ENCODE measurements at regions of chr7 and their contacts with region 1.

Region 1: DNA sequence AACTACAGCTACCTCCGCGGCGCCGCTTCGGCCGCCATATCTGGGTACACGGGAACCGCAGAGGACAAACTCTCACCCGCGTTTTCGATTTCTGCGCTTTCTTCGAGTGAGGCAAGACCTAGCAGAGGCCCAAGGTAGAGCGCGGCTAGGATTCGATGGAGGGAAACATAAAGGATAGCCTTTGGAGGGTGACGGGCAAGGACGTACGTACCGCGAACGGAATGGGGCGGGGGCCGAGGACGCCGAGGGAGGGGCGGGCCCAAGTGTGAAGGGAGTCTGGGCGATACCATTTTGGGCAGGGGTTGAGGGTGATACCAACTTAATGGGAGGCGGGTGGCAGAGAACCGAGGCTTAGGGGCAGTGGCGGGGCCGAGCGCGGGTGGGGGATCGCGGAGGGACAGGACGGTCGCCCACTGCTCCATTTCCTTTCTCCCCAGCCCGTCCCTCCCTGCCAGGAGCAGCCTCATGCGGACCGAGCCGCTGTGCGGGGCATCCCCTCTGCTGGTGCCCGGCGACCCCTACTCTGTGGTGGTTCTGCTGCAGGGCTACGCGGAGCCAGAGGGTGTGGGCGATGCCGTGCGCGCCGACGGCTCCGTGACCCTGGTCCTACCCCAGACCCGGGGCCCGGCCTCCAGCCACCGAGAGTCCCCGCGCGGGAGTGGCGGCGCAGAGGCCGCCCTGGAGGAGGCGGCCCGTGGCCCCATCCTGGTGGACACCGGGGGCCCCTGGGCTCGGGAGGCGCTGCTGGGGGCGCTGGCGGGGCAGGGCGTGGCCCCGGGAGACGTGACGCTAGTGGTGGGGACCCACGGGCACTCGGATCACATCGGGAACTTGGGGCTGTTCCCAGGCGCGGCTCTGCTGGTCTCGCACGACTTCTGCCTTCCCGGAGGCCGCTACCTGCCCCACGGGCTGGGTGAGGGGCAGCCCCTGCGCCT is at the start of gene MBLAC1:
- DNase-seq: peak; percentile 95
- ATAC-seq: peak; percentile 74
- H3K4me3 Mint-ChIP-seq: peak within 1 kb of the TSS; percentile 93
- H3K27ac Mint-ChIP-seq: peak within 1 kb of the TSS; percentile 99
- H3K4me1 Mint-ChIP-seq: peaks cover 28% of the 10 kb centered on the region
- H3K27me3 Mint-ChIP-seq: no peaks in the 10 kb centered on the region
- total RNA-seq, gene MBLAC1: 1.6 to 2.2 TPM

Region 2: DNA sequence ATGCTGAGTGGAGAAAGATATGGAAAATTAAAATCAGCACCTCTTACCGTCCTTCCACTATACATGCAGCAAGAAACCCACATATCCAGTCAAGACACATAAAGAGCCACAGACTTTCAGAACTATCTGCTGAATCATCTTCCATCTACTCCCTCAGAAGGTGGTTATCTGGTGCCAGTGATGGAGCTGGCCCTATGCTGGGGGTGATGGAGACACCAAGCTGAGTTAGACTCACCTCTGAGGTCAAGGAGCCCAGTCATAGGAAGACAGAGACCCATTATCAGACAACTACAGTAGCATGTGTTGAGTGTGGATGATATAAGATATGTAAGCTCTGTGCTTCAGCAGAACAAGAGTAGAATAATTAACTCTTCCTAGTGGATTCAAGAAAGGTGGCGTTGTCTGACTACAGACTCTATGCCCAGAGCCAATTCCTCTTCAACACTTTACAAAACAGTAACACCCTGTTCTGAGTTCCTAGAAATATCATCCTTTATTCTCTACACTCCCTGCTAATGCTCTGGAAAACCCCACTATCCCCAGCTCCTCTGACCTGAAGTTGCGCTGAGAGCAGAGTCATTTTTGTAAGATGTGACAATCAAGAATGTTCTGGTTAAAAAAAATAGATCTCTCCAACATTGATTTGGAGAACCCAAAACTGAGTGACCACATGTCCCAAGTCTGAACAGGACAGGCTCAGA is 461.7 kb before region 1 on chr7:
- CTCF ChIA-PET with region 1: no interaction called
- POLR2A ChIA-PET with region 1: no interaction called
- intact Hi-C with region 1: no loop called
- DNase-seq: peak; percentile 27
- ATAC-seq: peak; percentile 86
- H3K4me3 Mint-ChIP-seq: no peak overlapping the region
- H3K27ac Mint-ChIP-seq: peak overlapping the region; percentile 39
- H3K4me1 Mint-ChIP-seq: peaks cover 11% of the 10 kb centered on the region
- H3K27me3 Mint-ChIP-seq: no peaks in the 10 kb centered on the region

Region 3: DNA sequence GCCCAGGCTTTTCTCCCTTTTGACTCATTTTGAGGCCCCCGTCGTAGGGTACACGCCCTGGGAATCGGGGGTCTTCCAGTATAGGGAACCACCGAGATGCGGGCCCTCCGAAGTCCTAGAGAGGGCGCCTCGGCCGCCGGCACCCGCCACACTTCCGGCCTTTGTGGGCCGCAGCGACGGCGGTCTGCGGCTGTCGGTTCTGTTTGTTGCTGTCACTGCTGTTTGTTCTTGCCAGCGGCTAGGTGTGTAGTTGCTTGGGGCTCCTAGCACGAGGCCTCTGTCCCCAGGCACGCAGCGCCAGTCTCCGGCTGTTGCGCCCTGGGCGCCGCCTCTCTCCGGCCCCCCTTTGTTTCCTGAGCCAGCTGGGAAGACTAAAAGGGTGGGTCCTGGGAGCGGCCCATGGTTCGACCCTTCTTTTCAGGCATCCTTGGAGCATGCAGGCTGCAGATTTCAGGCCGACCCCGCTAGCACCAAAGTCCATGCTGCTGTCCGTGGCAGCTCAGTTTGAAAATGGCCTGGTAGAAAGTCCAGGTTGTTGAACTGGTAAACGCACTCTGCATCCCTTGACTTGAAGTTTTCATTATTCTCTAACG is 129.6 kb before region 1 on chr7:
- CTCF ChIA-PET with region 1: interaction called, 3 read pairs
- POLR2A ChIA-PET with region 1: no interaction called
- intact Hi-C with region 1: loop called (anchors 1 to 5 kb)
- DNase-seq: peak; percentile 81
- ATAC-seq: peak; percentile 87
- H3K4me3 Mint-ChIP-seq: peak overlapping the region; percentile 67
- H3K27ac Mint-ChIP-seq: peak overlapping the region; percentile 89
- H3K4me1 Mint-ChIP-seq: peaks cover 15% of the 10 kb centered on the region
- H3K27me3 Mint-ChIP-seq: peaks cover 1% of the 10 kb centered on the region

Region 4: GRCh38 chr7:100049441-100050311 is 77.5 kb before region 1 on chr7 and contains the start of gene ZSCAN21:
- CTCF ChIA-PET with region 1: no interaction called
- POLR2A ChIA-PET with region 1: interaction called, 4 read pairs
- intact Hi-C with region 1: loop called in 1 of 2 experiments (anchors 2 kb)
- DNase-seq: peak; percentile 89
- ATAC-seq: peak; percentile 90
- H3K4me3 Mint-ChIP-seq: peak within 1 kb of the TSS; percentile 85
- H3K27ac Mint-ChIP-seq: peak within 1 kb of the TSS; percentile 86
- H3K4me1 Mint-ChIP-seq: peaks cover 17% of the 10 kb centered on the region
- H3K27me3 Mint-ChIP-seq: no peaks in the 10 kb centered on the region
- total RNA-seq, gene ZSCAN21: 6.4 to 7.4 TPM

Region 5: GRCh38 chr7:100088621-100089457 is 38.4 kb before region 1 on chr7 and contains the start of gene COPS6:
- CTCF ChIA-PET with region 1: interaction called, 4 read pairs
- POLR2A ChIA-PET with region 1: interaction called, 3 read pairs
- intact Hi-C with region 1: loop called (anchors 1 to 5 kb)
- DNase-seq: peak; percentile 92
- ATAC-seq: peak; percentile 67
- H3K4me3 Mint-ChIP-seq: peak within 1 kb of the TSS; percentile 89
- H3K27ac Mint-ChIP-seq: peak within 1 kb of the TSS; percentile 96
- H3K4me1 Mint-ChIP-seq: peaks cover 25% of the 10 kb centered on the region
- H3K27me3 Mint-ChIP-seq: no peaks in the 10 kb centered on the region
- total RNA-seq, gene COPS6: 88.6 to 89.0 TPM

Region 6: GRCh38 chr7:100101016-100101862 is 26.0 kb before region 1 on chr7 and contains the starts of genes AP4M1 and MCM7:
- CTCF ChIA-PET with region 1: interaction called, 14 read pairs
- POLR2A ChIA-PET with region 1: interaction called, 15 read pairs
- intact Hi-C with region 1: loop called (anchors 1 to 2 kb)
- DNase-seq: peak; percentile 99
- ATAC-seq: peak; percentile 91
- H3K4me3 Mint-ChIP-seq: peak within 1 kb of the TSS; percentile 90
- H3K27ac Mint-ChIP-seq: peak within 1 kb of the TSS; percentile 94
- H3K4me1 Mint-ChIP-seq: peaks cover 41% of the 10 kb centered on the region
- H3K27me3 Mint-ChIP-seq: no peaks in the 10 kb centered on the region
- total RNA-seq, gene AP4M1: 8.8 to 10.4 TPM
- total RNA-seq, gene MCM7: 411 to 429 TPM

Region 7: GRCh38 chr7:100177045-100178001 is 50.1 kb after region 1 on chr7 and contains the starts of genes GPC2 and STAG3:
- CTCF ChIA-PET with region 1: interaction called, 5 read pairs
- POLR2A ChIA-PET with region 1: interaction called, 4 read pairs
- intact Hi-C with region 1: loop called (anchors 1 to 5 kb)
- DNase-seq: peak; percentile 99
- ATAC-seq: peak; percentile 89
- H3K4me3 Mint-ChIP-seq: peak within 1 kb of the TSS; percentile 76
- H3K27ac Mint-ChIP-seq: peak within 1 kb of the TSS; percentile 65
- H3K4me1 Mint-ChIP-seq: peaks cover 39% of the 10 kb centered on the region
- H3K27me3 Mint-ChIP-seq: peaks cover 3% of the 10 kb centered on the region
- total RNA-seq, gene GPC2: 5.3 to 6.1 TPM
- total RNA-seq, gene STAG3: 24.7 to 28.3 TPM

Region 8: DNA sequence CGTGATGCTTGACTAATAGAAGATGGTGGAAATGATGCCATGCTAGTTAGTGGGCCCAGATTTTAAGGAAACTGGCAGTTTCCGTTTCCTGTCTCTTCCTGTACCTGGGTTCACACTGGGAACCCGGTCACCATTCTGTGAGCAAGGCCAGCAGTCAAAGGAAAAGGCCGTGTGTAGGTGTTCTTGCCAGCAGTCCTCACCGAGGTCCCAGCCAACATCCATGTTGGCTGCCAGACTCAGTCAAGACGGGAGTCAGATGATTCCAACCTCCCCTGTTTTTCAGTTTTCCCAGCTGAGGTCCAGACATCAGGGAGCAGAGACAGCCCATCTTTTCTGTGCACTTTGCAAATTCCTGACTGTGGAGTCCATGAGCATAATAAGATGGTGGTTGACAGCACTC is 215.6 kb after region 1 on chr7:
- CTCF ChIA-PET with region 1: interaction called, 7 read pairs
- POLR2A ChIA-PET with region 1: no interaction called
- intact Hi-C with region 1: loop called in 1 of 2 experiments (anchors 2 kb)
- DNase-seq: no peak
- ATAC-seq: no peak
- H3K4me3 Mint-ChIP-seq: no peak overlapping the region
- H3K27ac Mint-ChIP-seq: peak overlapping the region; percentile 59
- H3K4me1 Mint-ChIP-seq: peaks cover 44% of the 10 kb centered on the region
- H3K27me3 Mint-ChIP-seq: no peaks in the 10 kb centered on the region

Measured in activated CD4-positive, alpha-beta T cell treated with anti-CD3 and anti-CD28 coated beads for 36 hours (primary cell).